ENCODE measurements at regions of chr20 and their contacts with region 1.

Region 1: GRCh38 chr20:62368976-62369814 is 2.1 kb upstream of the LAMA5 start:
- DNase-seq: peak; percentile 59 to 75 (median 72)
- ATAC-seq: peak; percentile 58
- H3K4me3 ChIP-seq: no peak overlapping the region
- H3K27ac ChIP-seq: no peak overlapping the region
- H3K4me1 ChIP-seq: peaks cover 50 to 91% of the 10 kb centered on the region in 2 experiments
- H3K27me3 ChIP-seq: no peaks in the 10 kb centered on the region
- CTCF ChIP-seq: peak; percentile 34 to 47 (median 36); a peak in 3 of 6 replicates
- EP300 ChIP-seq: no peak
- POLR2A ChIP-seq: no peak
- RAD21 ChIP-seq: no peak

Region 2: GRCh38 chr20:61991476-61991875 is 377.7 kb before region 1 on chr20:
- CTCF ChIA-PET with region 1: no interaction called
- POLR2A ChIA-PET with region 1: no interaction called
- in situ Hi-C with region 1: loop called (anchors 10 kb)
- intact Hi-C with region 1: no loop called
- DNase-seq: no peak
- ATAC-seq: no peak
- H3K4me3 ChIP-seq: no peak overlapping the region
- H3K27ac ChIP-seq: no peak overlapping the region
- H3K4me1 ChIP-seq: peaks cover 3 to 4% of the 10 kb centered on the region in 2 experiments; a peak in 2 of 5 replicates
- H3K27me3 ChIP-seq: no peaks in the 10 kb centered on the region
- CTCF ChIP-seq: no peak
- EP300 ChIP-seq: no peak
- POLR2A ChIP-seq: no peak
- RAD21 ChIP-seq: no peak

Region 3: GRCh38 chr20:62252342-62252966 is 116.7 kb before region 1 on chr20:
- CTCF ChIA-PET with region 1: no interaction called
- POLR2A ChIA-PET with region 1: no interaction called
- in situ Hi-C with region 1: no loop called
- intact Hi-C with region 1: no loop called
- DNase-seq: no peak
- ATAC-seq: no peak
- H3K4me3 ChIP-seq: no peak overlapping the region
- H3K27ac ChIP-seq: no peak overlapping the region
- H3K4me1 ChIP-seq: peaks cover 0 to 18% of the 10 kb centered on the region in 2 experiments; a peak in 2 of 5 replicates
- H3K27me3 ChIP-seq: no peaks in the 10 kb centered on the region
- CTCF ChIP-seq: no peak
- EP300 ChIP-seq: no peak
- POLR2A ChIP-seq: no peak
- RAD21 ChIP-seq: no peak

Region 4: DNA sequence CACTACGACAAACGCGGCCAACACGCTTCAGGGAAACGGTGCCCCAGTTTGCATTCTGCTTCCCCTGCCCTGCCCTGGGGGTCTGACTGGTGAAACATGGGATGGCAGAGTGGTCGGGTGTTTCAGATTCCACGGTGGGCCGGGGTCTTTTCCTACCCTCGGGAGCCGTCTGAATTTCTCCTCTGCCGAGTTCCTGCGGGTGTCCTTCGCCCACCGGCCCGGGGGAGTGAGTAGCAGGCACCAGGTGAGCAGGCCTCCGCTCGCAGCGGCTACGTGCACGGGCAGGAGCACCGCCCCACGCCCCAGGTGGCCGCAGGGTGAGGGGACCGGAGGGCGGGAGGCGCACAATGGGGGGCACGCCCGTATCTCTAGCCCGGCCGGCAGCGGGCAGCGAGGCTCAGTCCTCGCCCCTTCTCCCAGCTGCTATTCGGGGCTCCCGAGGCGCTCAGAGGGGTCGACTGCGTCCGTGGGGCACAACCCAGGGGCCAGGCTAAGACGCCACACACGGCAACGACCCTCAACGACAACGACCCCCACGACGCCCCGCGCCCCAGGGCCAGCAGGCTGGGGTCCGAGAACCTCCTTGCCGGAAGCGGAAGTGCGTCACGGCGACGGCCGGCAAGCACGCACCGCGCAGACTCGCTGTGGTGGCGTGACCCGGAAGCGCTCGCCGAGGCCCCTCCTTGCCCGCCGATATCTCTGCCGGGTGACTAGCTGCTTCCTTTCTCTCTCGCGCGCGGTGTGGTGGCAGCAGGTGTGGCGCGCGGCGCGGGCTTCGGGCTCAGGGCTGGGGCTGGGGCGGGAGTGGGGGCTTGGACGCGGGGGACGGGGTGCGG is 17.4 kb after region 1 on chr20 and contains the start of gene RPS21:
- CTCF ChIA-PET with region 1: no interaction called
- POLR2A ChIA-PET with region 1: interaction called, 11 read pairs
- in situ Hi-C with region 1: no loop called
- intact Hi-C with region 1: no loop called
- DNase-seq: peak; percentile 87 to 96 (median 92)
- ATAC-seq: peak; percentile 92
- H3K4me3 ChIP-seq: peak within 1 kb of the TSS; percentile 100
- H3K27ac ChIP-seq: peak within 1 kb of the TSS; percentile 95
- H3K4me1 ChIP-seq: peaks cover 13 to 39% of the 10 kb centered on the region in 2 experiments; a peak in 4 of 5 replicates
- H3K27me3 ChIP-seq: no peaks in the 10 kb centered on the region
- CTCF ChIP-seq: no peak
- EP300 ChIP-seq: no peak; the same call in 1 of the 2 replicates
- POLR2A ChIP-seq: peak; percentile 92
- RAD21 ChIP-seq: no peak
- polyA plus RNA-seq, gene RPS21: 3,588 to 3,968 TPM